Naive thymus-derived CD4-positive, alpha-beta T cell (primary cell): ENCODE measurements at regions of chr1 and their contacts with region 1.

Region 1: DNA sequence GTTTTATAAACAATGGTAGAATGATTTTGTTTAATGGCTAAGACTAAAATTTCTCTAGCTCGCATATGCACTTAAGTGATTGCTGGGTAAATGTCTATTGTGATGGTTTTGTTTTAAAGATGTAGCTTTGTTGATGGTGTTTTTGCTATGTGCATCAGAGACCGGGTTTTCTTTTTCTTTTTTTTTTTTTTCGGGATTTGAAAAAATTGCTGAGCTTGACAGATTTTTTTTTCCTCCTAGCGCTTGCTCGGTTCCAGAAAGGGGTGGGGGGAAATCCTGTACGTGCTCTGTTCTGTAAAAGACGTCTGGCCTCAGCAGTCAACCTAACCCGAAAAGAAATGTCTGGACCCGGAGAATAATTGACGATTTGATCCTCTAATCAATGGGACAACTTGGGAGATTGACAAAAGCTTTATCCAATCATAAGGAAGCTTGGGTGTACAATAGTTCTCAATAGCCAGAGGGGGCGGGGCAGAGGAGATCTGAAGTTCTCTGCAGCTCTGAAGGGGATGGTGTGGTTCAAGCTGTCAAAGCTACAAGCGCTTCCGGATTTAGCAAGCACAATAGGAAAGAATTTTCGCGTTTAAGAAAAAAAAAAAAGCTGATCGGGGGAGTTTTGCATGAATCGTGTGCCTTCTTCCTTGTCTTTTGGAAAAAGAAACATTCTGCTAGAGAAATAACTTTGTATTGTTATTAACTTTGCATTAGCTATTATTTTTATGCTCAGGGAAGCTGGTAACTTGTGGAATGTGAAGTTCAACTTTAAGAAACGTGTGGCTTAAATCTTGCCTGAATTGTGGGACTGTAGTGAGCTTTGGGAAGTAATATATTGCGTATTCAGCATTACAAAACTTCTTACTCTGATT is 4.5 kb upstream of the NFIA start:
- DNase-seq: peak; percentile 63 to 98 (median 95)
- ATAC-seq: peak; percentile 84
- H3K4me3 ChIP-seq: peak overlapping the region; percentile 73
- H3K4me3 Mint-ChIP-seq: peak overlapping the region; percentile 91 to 98 (median 94)
- H3K27ac ChIP-seq: peak overlapping the region; percentile 75
- H3K27ac Mint-ChIP-seq: peak overlapping the region; percentile 87 to 100 (median 96)
- H3K4me1 ChIP-seq: peaks cover 24 to 41% of the 10 kb centered on the region in 2 donors
- H3K4me1 Mint-ChIP-seq: peaks cover 34 to 49% (median 46%) of the 10 kb centered on the region in 7 donors
- H3K27me3 ChIP-seq: no peaks in the 10 kb centered on the region
- H3K27me3 Mint-ChIP-seq: peaks cover 0 to 58% (median 0%) of the 10 kb centered on the region in 5 donors

Region 2: GRCh38 chr1:60866917-60867531 is 210.9 kb before region 1 on chr1:
- CTCF ChIA-PET with region 1: no interaction called
- POLR2A ChIA-PET with region 1: no interaction called
- intact Hi-C with region 1: no loop called
- DNase-seq: no peak
- ATAC-seq: peak; percentile 26
- H3K4me3 ChIP-seq: no peak overlapping the region
- H3K4me3 Mint-ChIP-seq: no peak overlapping the region
- H3K27ac ChIP-seq: no peak overlapping the region
- H3K27ac Mint-ChIP-seq: no peak overlapping the region
- H3K4me1 ChIP-seq: no peaks in the 10 kb centered on the region
- H3K4me1 Mint-ChIP-seq: no peaks in the 10 kb centered on the region
- H3K27me3 ChIP-seq: no peaks in the 10 kb centered on the region
- H3K27me3 Mint-ChIP-seq: peaks cover 5 to 17% (median 12%) of the 10 kb centered on the region in 5 donors

Region 3: GRCh38 chr1:60969971-60970509 is 107.9 kb before region 1 on chr1:
- CTCF ChIA-PET with region 1: no interaction called
- POLR2A ChIA-PET with region 1: no interaction called
- intact Hi-C with region 1: no loop called
- DNase-seq: no peak
- ATAC-seq: no peak
- H3K4me3 ChIP-seq: no peak overlapping the region
- H3K4me3 Mint-ChIP-seq: no peak overlapping the region
- H3K27ac ChIP-seq: no peak overlapping the region
- H3K27ac Mint-ChIP-seq: no peak overlapping the region
- H3K4me1 ChIP-seq: no peaks in the 10 kb centered on the region
- H3K4me1 Mint-ChIP-seq: peaks cover 0 to 1% (median 0%) of the 10 kb centered on the region in 7 donors
- H3K27me3 ChIP-seq: no peaks in the 10 kb centered on the region
- H3K27me3 Mint-ChIP-seq: peaks cover 9 to 28% (median 26%) of the 10 kb centered on the region in 5 donors

Region 4: DNA sequence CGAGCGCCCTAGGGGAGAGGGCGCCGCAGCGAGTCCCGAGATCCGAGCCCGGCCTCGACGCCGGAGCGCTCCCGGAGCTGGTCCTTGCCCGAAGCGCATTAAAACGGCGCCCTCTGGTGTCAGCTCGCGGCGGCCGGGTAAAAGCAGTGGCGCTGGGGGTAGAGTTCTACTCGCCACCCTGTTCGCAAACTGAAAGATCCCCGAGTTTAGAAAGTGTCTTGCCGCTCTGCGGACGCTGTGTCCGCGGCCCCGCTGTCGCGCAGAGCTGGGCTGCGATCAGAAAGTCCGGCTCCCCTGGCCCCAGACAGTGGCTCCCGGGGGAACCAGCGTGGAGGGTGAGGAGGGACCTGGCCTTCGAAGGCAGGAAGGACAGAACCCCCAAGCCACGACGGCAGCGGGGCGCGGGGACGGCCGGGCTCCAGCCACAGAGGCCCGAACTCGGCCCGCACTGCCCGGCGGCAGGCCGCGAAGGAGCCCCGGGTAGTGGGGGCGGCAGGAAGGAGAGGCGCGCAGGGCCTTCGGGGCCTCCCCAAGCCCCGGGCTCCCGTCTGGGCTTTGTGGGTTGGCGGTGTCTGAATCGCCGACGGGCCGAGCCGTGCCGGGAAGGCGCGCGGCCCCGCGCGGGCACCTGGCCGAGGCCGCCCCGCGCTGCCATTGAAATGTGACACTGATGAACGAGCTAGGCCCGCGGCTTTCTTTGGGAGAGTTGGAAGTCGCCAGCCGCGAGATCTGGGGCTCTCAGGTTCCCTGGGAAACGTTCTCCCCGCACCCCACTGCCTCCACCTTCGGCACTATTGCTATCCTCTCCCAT is 34.7 kb before region 1 on chr1:
- CTCF ChIA-PET with region 1: interaction called, 29 read pairs
- POLR2A ChIA-PET with region 1: no interaction called
- intact Hi-C with region 1: loop called in 1 of 2 experiments (anchors 5 kb)
- DNase-seq: peak; percentile 62 to 83 (median 78)
- ATAC-seq: peak; percentile 96
- H3K4me3 ChIP-seq: peak overlapping the region; percentile 35
- H3K4me3 Mint-ChIP-seq: peak overlapping the region; percentile 53 to 88 (median 73)
- H3K27ac ChIP-seq: no peak overlapping the region
- H3K27ac Mint-ChIP-seq: no peak overlapping the region
- H3K4me1 ChIP-seq: peaks cover 3 to 4% of the 10 kb centered on the region in 2 donors
- H3K4me1 Mint-ChIP-seq: peaks cover 0 to 4% (median 0%) of the 10 kb centered on the region in 7 donors
- H3K27me3 ChIP-seq: peaks cover 0 to 8% of the 10 kb centered on the region in 2 donors
- H3K27me3 Mint-ChIP-seq: peaks cover 28 to 67% (median 38%) of the 10 kb centered on the region in 5 donors

Region 5: GRCh38 chr1:61067404-61068019 is 10.4 kb before region 1 on chr1:
- CTCF ChIA-PET with region 1: interaction called, 3 read pairs
- POLR2A ChIA-PET with region 1: interaction called, 4 read pairs
- intact Hi-C with region 1: loop called in 1 of 2 experiments (anchors 1 kb)
- DNase-seq: no peak
- ATAC-seq: no peak
- H3K4me3 ChIP-seq: no peak overlapping the region
- H3K4me3 Mint-ChIP-seq: no peak overlapping the region
- H3K27ac ChIP-seq: no peak overlapping the region
- H3K27ac Mint-ChIP-seq: no peak overlapping the region
- H3K4me1 ChIP-seq: no peaks in the 10 kb centered on the region
- H3K4me1 Mint-ChIP-seq: peaks cover 0 to 4% (median 0%) of the 10 kb centered on the region in 7 donors
- H3K27me3 ChIP-seq: no peaks in the 10 kb centered on the region
- H3K27me3 Mint-ChIP-seq: peaks cover 0 to 32% (median 4%) of the 10 kb centered on the region in 5 donors

Region 6: GRCh38 chr1:61741711-61742619 is 664.1 kb after region 1 on chr1 and contains the start of gene PATJ:
- CTCF ChIA-PET with region 1: no interaction called
- POLR2A ChIA-PET with region 1: no interaction called
- intact Hi-C with region 1: loop called (anchors 5 kb)
- DNase-seq: peak; percentile 56 to 78 (median 73)
- ATAC-seq: peak; percentile 93
- H3K4me3 ChIP-seq: peak within 1 kb of the TSS; percentile 62
- H3K4me3 Mint-ChIP-seq: peak within 1 kb of the TSS; percentile 94 to 100 (median 97)
- H3K27ac ChIP-seq: peak within 1 kb of the TSS; percentile 76
- H3K27ac Mint-ChIP-seq: peak within 1 kb of the TSS; percentile 88 to 99 (median 96)
- H3K4me1 ChIP-seq: peaks cover 9 to 13% of the 10 kb centered on the region in 2 donors
- H3K4me1 Mint-ChIP-seq: peaks cover 17 to 46% (median 35%) of the 10 kb centered on the region in 7 donors
- H3K27me3 ChIP-seq: no peaks in the 10 kb centered on the region
- H3K27me3 Mint-ChIP-seq: no peaks in the 10 kb centered on the region
- total RNA-seq, gene PATJ: 13.4 to 64.5 (median 34.0) TPM

Region 7: GRCh38 chr1:62687903-62688686 is 1610.2 kb after region 1 on chr1 and contains the start of gene DOCK7:
- CTCF ChIA-PET with region 1: no interaction called
- POLR2A ChIA-PET with region 1: interaction called, 3 read pairs
- intact Hi-C with region 1: loop called in 1 of 2 experiments (anchors 10 kb)
- DNase-seq: peak; percentile 25 to 63 (median 51)
- ATAC-seq: peak; percentile 76
- H3K4me3 ChIP-seq: peak within 1 kb of the TSS; percentile 84
- H3K4me3 Mint-ChIP-seq: peak within 1 kb of the TSS; percentile 89 to 99 (median 96)
- H3K27ac ChIP-seq: peak within 1 kb of the TSS; percentile 65
- H3K27ac Mint-ChIP-seq: peak within 1 kb of the TSS; percentile 80 to 98 (median 95)
- H3K4me1 ChIP-seq: peaks cover 0 to 8% of the 10 kb centered on the region in 2 donors
- H3K4me1 Mint-ChIP-seq: peaks cover 8 to 32% (median 16%) of the 10 kb centered on the region in 7 donors
- H3K27me3 ChIP-seq: no peaks in the 10 kb centered on the region
- H3K27me3 Mint-ChIP-seq: peaks cover 0 to 10% (median 3%) of the 10 kb centered on the region in 5 donors
- total RNA-seq, gene DOCK7: 5.1 to 15.0 (median 12.4) TPM